Lower lobe of right lung (tissue), 2 donors: ENCODE measurements at regions of chr15 and their contacts with region 1.

Region 1: DNA sequence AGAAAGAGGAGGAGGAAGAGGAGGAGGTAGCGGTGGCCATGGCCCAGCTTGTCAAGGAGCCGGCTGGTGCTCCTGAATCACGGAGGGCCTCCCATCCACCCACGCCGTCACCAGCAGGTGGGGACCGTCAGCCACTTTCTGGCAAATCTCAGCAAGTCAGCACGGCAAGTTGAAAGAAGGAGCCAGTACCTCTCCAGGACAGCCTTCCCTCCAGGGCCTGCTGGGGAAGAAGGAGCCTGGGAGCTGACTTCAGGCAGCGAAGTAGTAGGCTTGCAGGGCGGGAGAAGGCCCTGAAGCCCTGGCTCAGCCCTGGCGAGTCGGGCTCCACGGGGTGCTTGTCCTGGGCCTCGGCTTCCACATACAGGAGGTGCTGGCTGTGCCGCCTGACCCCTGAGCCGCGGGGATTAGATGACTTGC is 99.2 kb upstream of the TRPM1 start:
- DNase-seq: peak; percentile 88
- ATAC-seq: peak; percentile 91 to 93
- H3K4me3 ChIP-seq: no peak overlapping the region
- H3K27ac ChIP-seq: no peak overlapping the region
- H3K4me1 ChIP-seq: no peaks in the 10 kb centered on the region
- H3K27me3 ChIP-seq: no peaks in the 10 kb centered on the region
- CTCF ChIP-seq: peak; percentile 65

Region 2: DNA sequence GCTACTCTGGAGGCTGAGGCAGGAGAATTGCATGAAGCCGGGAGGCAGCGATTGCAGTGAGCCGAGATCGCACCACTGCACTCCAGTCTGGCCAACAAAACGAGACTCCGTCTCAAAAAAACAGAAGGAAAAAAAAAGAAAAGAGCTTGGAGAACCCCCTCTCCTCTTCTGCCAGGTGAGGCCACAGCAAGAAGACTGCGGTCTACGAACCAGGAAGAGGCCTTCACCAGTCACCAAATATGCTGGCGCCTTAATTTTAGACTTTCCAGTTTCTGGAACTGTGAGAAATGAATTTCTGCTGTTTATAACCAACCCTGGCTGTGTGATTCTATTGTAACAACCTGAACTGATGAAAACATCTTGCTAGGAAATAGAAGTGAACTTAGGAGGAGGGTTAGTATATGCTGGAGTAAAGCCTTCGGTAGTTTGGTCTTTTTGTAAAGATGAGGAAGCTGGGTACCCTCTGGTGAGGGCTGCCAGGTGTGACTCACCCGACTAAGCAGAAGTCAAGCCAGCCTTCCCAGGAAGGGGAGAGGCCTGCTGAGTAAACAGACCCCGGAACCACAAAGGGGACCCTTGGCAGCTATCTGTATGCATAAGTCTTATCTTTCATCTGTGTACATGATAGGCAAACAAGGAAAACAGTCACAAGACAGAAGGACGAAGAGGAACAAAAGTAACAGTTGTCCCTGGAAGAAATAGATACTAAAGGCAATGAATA is 204.6 kb after region 1 on chr15:
- intact Hi-C with region 1: no loop called
- DNase-seq: no peak
- ATAC-seq: no peak
- H3K4me3 ChIP-seq: no peak overlapping the region
- H3K27ac ChIP-seq: no peak overlapping the region
- H3K4me1 ChIP-seq: peaks cover 24% of the 10 kb centered on the region
- H3K27me3 ChIP-seq: no peaks in the 10 kb centered on the region
- CTCF ChIP-seq: no peak

Region 3: DNA sequence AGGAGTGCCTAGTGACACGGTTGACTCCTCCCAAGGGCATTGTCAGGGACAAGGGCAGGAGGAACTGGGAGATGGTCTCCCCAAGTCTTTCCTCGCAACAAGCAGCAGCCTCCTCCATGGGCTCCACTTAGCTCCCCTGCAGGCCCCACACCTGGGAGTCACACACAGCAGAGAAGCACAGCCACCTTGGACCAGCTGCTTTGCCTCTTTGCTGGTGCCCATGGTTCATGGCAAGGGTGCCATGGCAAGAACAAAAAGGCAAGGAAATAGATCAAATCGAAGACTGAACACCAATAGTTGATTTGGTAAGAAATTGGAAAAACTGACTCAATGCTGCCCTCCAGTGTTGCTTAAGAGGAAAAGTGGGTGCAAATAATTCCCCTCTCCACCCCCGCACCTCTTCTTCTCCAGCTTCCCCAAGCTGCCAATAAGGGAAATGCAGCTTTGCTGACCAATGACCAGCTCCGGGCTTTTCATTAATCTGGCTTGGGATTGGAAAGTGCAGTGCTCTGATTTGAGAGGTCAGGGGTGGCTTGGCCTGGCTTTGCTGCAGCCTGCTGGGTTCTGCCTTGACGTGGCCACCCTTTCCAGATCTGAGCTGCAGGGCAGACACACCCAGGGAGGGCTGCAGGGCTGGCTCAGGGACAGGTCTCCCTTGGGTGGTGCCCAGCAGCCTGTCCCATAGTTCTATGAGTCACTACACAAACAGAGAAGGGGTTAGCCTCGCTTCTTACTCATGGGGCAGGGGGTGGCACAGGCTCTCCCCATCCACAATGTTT is 287.9 kb after region 1 on chr15:
- intact Hi-C with region 1: loop called (anchors 10 kb)
- DNase-seq: no peak
- ATAC-seq: peak; percentile 89 to 90
- H3K4me3 ChIP-seq: no peak overlapping the region
- H3K27ac ChIP-seq: peak overlapping the region; percentile 33
- H3K4me1 ChIP-seq: peaks cover 25% of the 10 kb centered on the region
- H3K27me3 ChIP-seq: peaks cover 11% of the 10 kb centered on the region
- CTCF ChIP-seq: peak; percentile 91